Transverse colon (tissue), 4 donors: ENCODE measurements at regions of chrX and their contacts with region 1.

Region 1: GRCh38 chrX:130024127-130024526 is 41.7 kb downstream of the BCORL1 start:
- DNase-seq: peak; percentile 84
- H3K4me3 ChIP-seq: no peak overlapping the region
- H3K27ac ChIP-seq: peak overlapping the region in 1 of 4 donors; percentile 16
- H3K4me1 ChIP-seq: peaks cover 0 to 3% (median 0%) of the 10 kb centered on the region in 4 donors
- H3K27me3 ChIP-seq: no peaks in the 10 kb centered on the region
- CTCF ChIP-seq: no peak
- EP300 ChIP-seq: no peak
- POLR2A ChIP-seq: no peak

Region 2: DNA sequence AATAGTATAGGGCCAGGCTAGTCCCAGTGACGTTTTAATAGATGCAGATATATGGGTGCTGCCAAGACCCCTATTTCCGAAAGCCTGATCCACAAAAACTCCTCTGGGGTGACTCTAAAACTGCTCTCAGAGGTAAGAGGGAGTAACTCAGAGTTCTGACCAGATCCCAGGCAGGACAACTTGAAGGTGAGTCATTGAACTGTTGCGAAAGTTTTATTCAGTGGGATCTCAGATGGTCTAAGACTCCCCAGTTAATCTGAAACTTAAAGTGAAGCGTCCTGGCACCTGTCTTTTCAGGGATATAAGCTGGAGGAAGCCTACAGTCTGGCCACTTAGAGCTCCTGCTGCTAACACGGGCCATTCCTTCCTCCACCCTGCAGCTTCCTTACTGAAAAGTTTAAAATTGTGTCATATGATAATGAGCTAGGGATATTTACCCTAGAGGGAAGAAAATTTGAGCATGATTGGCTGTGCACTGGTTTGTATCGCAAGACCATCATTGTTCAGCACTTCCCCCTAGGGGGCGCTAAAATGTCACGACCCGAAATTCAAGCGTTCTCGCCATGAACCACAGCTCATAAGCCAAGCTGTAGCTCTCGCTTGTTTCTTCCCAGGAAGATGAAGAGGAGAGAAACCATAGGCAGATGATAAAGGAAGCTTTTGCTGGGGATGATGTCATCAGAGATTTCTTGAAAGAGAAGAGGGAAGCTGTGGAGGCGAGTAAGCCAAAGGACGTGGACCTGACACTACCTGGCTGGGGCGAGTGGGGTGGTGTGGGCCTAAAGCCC is 98.6 kb before region 1 on chrX:
- in situ Hi-C with region 1: loop called in 3 of 4 experiments (anchors 10 to 25 kb)
- intact Hi-C with region 1: loop called (anchors 5 kb)
- DNase-seq: peak; percentile 75
- H3K4me3 ChIP-seq: no peak overlapping the region
- H3K27ac ChIP-seq: no peak overlapping the region
- H3K4me1 ChIP-seq: no peaks in the 10 kb centered on the region
- H3K27me3 ChIP-seq: no peaks in the 10 kb centered on the region
- CTCF ChIP-seq: peak; percentile 56 to 65 (median 63)
- EP300 ChIP-seq: no peak
- POLR2A ChIP-seq: no peak

Region 3: DNA sequence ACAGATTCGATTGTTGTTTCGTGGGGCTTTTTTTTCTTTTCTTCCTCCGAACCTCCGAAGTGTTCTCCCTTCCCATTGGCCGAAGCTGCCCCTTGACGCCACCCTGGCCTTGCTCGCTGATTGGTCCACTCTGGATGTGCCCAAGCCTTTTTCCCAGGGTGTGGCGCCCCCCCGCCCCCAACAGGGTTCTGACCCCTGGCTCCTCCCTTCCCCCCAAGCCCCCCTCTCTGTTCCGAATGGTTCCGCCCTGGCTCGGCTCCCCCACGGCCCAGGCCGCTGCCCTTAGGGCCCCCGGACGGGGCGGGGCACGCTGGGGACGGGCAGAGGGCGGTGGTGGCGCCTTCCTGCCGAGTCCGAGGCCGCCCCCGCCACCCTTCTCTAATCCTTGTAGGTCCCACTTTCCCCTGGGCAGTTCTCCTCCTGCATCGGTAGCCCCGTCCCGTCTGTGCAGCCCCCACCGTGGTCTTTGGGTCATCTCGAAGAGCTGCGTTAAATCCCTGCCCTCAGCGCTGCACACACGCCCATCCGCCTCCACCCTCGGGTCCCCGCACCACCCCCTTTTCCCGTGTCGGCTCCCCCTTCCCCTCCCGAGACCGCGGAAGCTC is 92.6 kb before region 1 on chrX:
- in situ Hi-C with region 1: loop called in 3 of 4 experiments (anchors 10 to 25 kb)
- intact Hi-C with region 1: loop called (anchors 5 kb)
- DNase-seq: peak; percentile 93
- H3K4me3 ChIP-seq: peak overlapping the region; percentile 43 to 66 (median 56)
- H3K27ac ChIP-seq: peak overlapping the region; percentile 85 to 92 (median 90)
- H3K4me1 ChIP-seq: peaks cover 0 to 5% (median 0%) of the 10 kb centered on the region in 4 donors
- H3K27me3 ChIP-seq: no peaks in the 10 kb centered on the region
- CTCF ChIP-seq: no peak
- EP300 ChIP-seq: no peak
- POLR2A ChIP-seq: peak; percentile 71

Region 4: GRCh38 chrX:129957241-129958082 is 66.7 kb before region 1 on chrX:
- in situ Hi-C with region 1: no loop called
- intact Hi-C with region 1: no loop called
- DNase-seq: peak; percentile 78
- H3K4me3 ChIP-seq: peak overlapping the region; percentile 1 to 52 (median 31)
- H3K27ac ChIP-seq: peak overlapping the region; percentile 63 to 80 (median 76)
- H3K4me1 ChIP-seq: peaks cover 0 to 27% (median 5%) of the 10 kb centered on the region in 4 donors
- H3K27me3 ChIP-seq: no peaks in the 10 kb centered on the region
- CTCF ChIP-seq: no peak
- EP300 ChIP-seq: no peak
- POLR2A ChIP-seq: peak; percentile 57

Region 5: DNA sequence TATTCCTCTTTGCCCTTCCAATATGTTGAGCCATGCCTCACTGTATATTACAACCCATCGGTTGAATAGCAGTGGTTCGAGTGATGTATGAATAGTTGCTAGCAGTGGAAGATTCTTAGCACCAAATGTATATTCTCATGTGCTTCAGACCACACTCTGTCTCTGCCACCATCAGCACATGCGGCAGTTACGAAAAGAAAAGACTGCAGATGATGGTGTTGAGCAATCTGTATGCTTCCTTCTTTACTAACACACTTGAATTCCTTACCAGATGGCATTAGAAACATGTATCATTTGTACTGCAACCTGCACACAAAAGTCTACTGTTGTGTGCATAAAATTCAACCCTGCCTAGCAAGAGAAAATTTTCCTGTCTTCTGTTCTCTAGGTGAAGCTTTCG is 664.2 kb after region 1 on chrX:
- in situ Hi-C with region 1: no loop called
- intact Hi-C with region 1: no loop called
- DNase-seq: no peak
- H3K4me3 ChIP-seq: no peak overlapping the region
- H3K27ac ChIP-seq: no peak overlapping the region
- H3K4me1 ChIP-seq: no peaks in the 10 kb centered on the region
- H3K27me3 ChIP-seq: no peaks in the 10 kb centered on the region
- CTCF ChIP-seq: no peak
- EP300 ChIP-seq: no peak
- POLR2A ChIP-seq: no peak